AG04450 (cell line): ENCODE measurements at regions of chr2 and their contacts with region 1.

Region 1: GRCh38 chr2:100610381-100610831 is 47.6 kb downstream of the PDCL3 start:
- DNase-seq: peak; percentile 15
- H3K4me3 ChIP-seq: no peak overlapping the region
- H3K27ac ChIP-seq: no peak overlapping the region
- H3K27me3 ChIP-seq: peaks cover 4% of the 10 kb centered on the region
- CTCF ChIP-seq: peak; percentile 74

Region 2: DNA sequence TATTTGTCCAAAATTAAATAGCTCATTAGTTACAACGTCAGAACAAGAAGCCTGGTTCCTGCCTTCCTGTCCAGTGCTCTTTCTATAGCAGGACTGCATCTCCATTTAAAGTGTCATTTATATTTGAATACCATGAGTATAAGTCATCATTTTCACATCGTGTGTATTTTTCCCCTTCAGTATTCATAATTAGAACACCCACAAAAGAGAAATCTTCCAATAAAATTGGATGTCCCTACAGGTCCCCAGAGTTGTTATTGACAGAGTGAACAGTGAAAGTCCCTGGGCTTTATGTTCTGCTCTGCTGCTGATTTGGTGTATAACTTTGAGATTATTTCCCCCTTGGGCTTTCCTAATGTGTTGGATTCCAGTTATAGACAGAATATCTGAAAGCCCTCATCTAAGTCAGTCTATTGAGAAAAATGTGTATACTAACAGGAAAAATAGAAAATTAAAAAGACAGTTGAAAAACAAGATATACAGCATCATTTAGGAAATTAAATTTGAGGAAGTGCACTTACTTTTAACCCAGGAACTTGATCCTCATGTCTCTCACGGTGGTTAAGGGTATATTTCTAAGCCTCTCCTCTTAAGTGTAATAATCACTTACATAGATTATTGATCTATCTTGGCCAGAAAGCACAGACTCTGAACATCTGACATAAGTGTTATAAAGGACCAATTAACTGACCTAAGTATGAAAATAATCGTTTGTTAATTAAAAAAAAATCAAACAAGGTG is 1105.4 kb before region 1 on chr2:
- CTCF ChIA-PET with region 1: no interaction called
- POLR2A ChIA-PET with region 1: no interaction called
- DNase-seq: no peak
- H3K4me3 ChIP-seq: no peak overlapping the region
- H3K27ac ChIP-seq: no peak overlapping the region
- H3K27me3 ChIP-seq: peaks cover 20% of the 10 kb centered on the region
- CTCF ChIP-seq: no peak

Region 3: DNA sequence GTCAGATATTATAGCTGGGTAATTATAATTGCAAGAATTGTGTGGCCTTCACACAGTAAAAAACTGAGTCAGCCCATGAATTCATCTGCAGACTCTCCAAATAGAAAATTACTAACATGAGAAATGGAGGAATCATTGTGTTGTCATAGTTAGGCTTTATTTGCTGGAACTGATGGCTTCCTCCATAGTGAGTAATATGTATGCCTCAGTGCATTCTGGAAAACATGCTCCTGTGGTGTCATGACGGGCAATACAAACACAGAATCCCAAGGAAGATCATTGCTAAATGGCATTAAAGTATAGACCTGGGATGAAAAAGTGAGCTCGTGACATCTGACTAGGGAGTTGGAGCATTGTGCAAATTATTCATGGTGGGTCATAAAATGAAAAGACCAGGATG is 163.7 kb before region 1 on chr2:
- CTCF ChIA-PET with region 1: no interaction called
- POLR2A ChIA-PET with region 1: no interaction called
- DNase-seq: no peak
- H3K4me3 ChIP-seq: no peak overlapping the region
- H3K27ac ChIP-seq: no peak overlapping the region
- H3K27me3 ChIP-seq: peaks cover 4% of the 10 kb centered on the region
- CTCF ChIP-seq: no peak

Region 4: GRCh38 chr2:100580367-100581276 is 29.8 kb before region 1 on chr2:
- CTCF ChIA-PET with region 1: interaction called, 11 read pairs
- POLR2A ChIA-PET with region 1: no interaction called
- DNase-seq: no peak
- H3K4me3 ChIP-seq: no peak overlapping the region
- H3K27ac ChIP-seq: no peak overlapping the region
- H3K27me3 ChIP-seq: no peaks in the 10 kb centered on the region
- CTCF ChIP-seq: no peak

Region 5: DNA sequence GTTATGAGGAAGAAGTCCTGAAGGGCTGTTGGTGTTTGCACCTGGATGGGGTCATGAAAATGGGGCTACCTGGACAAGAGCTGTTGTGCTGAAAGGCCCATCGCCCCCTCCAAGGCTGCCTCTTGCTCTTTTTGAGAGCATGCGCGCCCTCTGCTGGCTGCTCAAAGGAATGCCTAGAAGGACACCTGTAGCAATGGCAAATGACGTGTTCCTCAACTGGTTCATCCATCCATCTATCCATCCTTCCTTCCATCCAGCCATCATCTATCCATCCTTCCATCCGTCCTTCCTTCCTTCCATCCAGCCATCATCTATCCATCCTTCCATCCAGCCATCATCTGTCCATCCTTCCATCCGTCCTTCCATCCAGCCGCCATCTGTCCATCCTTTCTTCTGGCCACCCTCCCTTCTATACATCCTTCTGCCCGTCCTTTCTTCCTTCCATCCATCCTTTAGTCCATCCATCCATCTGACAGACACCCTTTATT is 374.5 kb after region 1 on chr2:
- CTCF ChIA-PET with region 1: interaction called, 20 read pairs
- POLR2A ChIA-PET with region 1: no interaction called
- DNase-seq: peak; percentile 44
- H3K4me3 ChIP-seq: no peak overlapping the region
- H3K27ac ChIP-seq: no peak overlapping the region
- H3K27me3 ChIP-seq: no peaks in the 10 kb centered on the region
- CTCF ChIP-seq: peak; percentile 93